Calu3 (cell line): ENCODE measurements at regions of chr3 and their contacts with region 1.

Region 1: DNA sequence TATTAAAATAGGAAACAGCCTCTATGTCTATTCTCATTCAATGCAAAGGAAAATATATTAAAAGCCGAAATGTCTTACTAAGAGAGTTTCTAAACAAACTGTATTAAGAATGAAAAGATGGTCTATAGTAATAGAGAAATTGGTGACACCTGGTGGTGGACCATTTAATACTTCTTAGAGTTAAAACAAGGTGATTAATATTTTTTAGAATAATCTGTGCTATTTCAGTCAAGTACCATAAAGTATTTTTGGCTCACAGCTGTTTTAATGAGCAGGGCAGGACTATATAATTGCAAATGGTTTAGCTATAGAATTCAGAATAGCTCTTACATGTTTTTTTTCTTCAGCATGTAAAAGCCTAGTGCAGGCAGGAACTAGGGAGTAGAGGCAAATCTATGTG is 55.7 kb downstream of the SYNPR start:
- DNase-seq: peak; percentile 8
- H3K4me3 Mint-ChIP-seq: no peak overlapping the region
- H3K27ac Mint-ChIP-seq: no peak overlapping the region
- H3K4me1 Mint-ChIP-seq: no peaks in the 10 kb centered on the region
- H3K27me3 Mint-ChIP-seq: no peaks in the 10 kb centered on the region
- CTCF ChIP-seq: no peak

Region 2: GRCh38 chr3:62622553-62623193 is 711.2 kb before region 1 on chr3:
- CTCF ChIA-PET with region 1: no interaction called
- intact Hi-C with region 1: loop called (anchors 1 kb)
- DNase-seq: peak; percentile 28
- H3K4me3 Mint-ChIP-seq: no peak overlapping the region
- H3K27ac Mint-ChIP-seq: no peak overlapping the region
- H3K4me1 Mint-ChIP-seq: no peaks in the 10 kb centered on the region
- H3K27me3 Mint-ChIP-seq: no peaks in the 10 kb centered on the region
- CTCF ChIP-seq: peak; percentile 28

Region 3: GRCh38 chr3:62665598-62666437 is 668.0 kb before region 1 on chr3:
- CTCF ChIA-PET with region 1: no interaction called
- intact Hi-C with region 1: loop called (anchors 5 kb)
- DNase-seq: peak; percentile 75
- H3K4me3 Mint-ChIP-seq: no peak overlapping the region
- H3K27ac Mint-ChIP-seq: no peak overlapping the region
- H3K4me1 Mint-ChIP-seq: no peaks in the 10 kb centered on the region
- H3K27me3 Mint-ChIP-seq: peaks cover 70% of the 10 kb centered on the region
- CTCF ChIP-seq: peak; percentile 59

Region 4: GRCh38 chr3:63245548-63246241 is 88.1 kb before region 1 on chr3:
- CTCF ChIA-PET with region 1: no interaction called
- intact Hi-C with region 1: loop called (anchors 5 kb)
- DNase-seq: no peak
- H3K4me3 Mint-ChIP-seq: no peak overlapping the region
- H3K27ac Mint-ChIP-seq: no peak overlapping the region
- H3K4me1 Mint-ChIP-seq: no peaks in the 10 kb centered on the region
- H3K27me3 Mint-ChIP-seq: no peaks in the 10 kb centered on the region
- CTCF ChIP-seq: no peak

Region 5: GRCh38 chr3:63279005-63279878 is 54.6 kb before region 1 on chr3:
- CTCF ChIA-PET with region 1: no interaction called
- intact Hi-C with region 1: loop called (anchors 1 kb)
- DNase-seq: peak; percentile 4
- H3K4me3 Mint-ChIP-seq: peak overlapping the region; percentile 82
- H3K27ac Mint-ChIP-seq: peak overlapping the region; percentile 39
- H3K4me1 Mint-ChIP-seq: peaks cover 33% of the 10 kb centered on the region
- H3K27me3 Mint-ChIP-seq: peaks cover 13% of the 10 kb centered on the region
- CTCF ChIP-seq: no peak

Region 6: DNA sequence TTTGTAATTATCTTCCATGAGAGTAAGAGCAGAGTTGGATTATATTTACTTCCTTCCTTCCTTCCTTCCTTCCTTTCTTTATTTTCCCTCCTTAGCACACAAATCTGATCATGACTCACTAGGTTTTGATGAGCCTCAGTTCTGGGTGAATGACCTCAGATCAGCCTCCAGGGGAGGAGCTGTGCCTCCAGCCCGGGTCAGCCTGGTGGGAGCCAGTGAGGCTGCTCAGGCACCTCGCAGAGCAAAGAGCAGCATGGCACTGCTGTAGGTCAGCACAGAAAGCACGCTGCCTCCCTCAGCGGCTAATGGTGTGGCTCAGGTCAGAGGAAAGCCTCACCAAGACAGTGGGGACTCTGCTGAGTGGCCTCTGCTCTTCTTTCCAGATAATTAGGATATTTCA is 52.7 kb after region 1 on chr3:
- CTCF ChIA-PET with region 1: no interaction called
- intact Hi-C with region 1: no loop called
- DNase-seq: no peak
- H3K4me3 Mint-ChIP-seq: no peak overlapping the region
- H3K27ac Mint-ChIP-seq: no peak overlapping the region
- H3K4me1 Mint-ChIP-seq: peaks cover 26% of the 10 kb centered on the region
- H3K27me3 Mint-ChIP-seq: peaks cover 7% of the 10 kb centered on the region
- CTCF ChIP-seq: no peak